Ovary (tissue), 10 donors: ENCODE measurements at regions of chr19 and their contacts with region 1.

Region 1: DNA sequence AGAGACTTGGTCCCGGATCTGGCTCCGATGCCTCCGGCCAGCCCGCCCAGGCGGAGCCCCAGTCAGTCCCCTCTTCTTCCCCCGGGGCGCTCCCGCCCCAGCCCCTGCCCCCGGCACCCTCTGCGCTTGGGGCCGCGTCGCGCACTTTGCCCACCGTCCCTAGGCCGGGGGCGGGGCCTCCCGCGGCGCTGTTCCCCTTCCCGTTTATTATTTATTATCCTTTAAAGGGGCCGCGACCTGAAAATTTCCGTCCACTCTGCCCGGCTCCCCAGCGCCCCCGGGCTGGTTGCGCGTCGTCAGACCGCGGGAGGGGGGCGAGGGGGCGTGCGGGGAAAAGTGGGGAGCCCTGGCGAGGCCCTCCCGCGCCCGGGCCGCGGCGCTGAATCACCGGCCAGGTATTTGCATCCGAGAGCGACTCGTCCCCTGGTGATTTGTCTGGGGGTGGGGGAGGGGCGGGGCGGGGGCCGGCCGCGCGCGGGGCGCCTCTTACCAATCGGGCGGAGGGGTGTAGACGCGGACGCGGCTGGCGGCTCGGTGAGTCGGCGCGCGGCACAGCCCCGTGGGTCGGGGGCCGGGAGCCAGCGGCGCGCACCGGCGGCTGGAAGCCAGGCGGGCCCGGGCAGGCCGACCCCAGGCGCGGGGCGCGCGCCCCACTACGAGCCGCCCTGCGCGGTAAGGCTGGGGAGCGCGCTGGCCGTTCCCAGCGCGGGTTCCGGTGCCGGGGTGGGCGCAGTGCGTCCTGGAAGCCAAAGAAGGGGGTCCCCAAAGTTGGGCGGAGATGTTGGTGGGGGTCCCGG is at the start of gene ARID3A:
- DNase-seq: peak; percentile 73 to 86 (median 83)
- H3K4me3 ChIP-seq: peak within 1 kb of the TSS; percentile 93
- H3K27ac ChIP-seq: peak within 1 kb of the TSS in 1 of 2 donors; percentile 26
- H3K4me1 ChIP-seq: peaks cover 5% of the 10 kb centered on the region
- H3K27me3 ChIP-seq: no peaks in the 10 kb centered on the region
- CTCF ChIP-seq: no peak
- EP300 ChIP-seq: no peak
- POLR2A ChIP-seq: no peak
- total RNA-seq, gene ARID3A: 2.1 to 8.1 (median 5.2) TPM

Region 2: DNA sequence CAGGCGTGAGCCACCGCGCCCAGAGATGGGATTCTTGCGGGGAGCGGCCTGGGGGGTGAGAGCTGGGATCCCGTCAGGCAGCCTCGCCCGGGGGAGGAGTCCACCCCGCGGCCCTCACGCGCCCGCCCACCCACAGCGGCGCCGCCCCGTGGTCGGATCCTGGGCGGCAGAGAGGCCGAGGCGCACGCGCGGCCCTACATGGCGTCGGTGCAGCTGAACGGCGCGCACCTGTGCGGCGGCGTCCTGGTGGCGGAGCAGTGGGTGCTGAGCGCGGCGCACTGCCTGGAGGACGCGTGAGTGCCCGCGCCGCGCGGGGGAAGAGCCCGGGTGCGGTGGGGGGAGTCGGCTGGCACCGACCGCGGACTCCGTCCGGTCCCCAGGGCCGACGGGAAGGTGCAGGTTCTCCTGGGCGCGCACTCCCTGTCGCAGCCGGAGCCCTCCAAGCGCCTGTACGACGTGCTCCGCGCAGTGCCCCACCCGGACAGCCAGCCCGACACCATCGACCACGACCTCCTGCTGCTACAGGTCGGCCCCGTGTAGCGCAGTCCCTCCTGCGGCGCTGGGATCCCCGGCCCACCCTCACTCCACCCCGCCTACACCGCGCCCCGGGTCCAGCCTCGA is 65.1 kb before region 1 on chr19:
- intact Hi-C with region 1: loop called in 1 of 4 experiments (anchors 5 kb)
- DNase-seq: peak in 3 of 5 donors; percentile 71 to 73 (median 71)
- H3K4me3 ChIP-seq: peak overlapping the region; percentile 25
- H3K27ac ChIP-seq: no peak overlapping the region
- H3K4me1 ChIP-seq: peaks cover 9% of the 10 kb centered on the region
- H3K27me3 ChIP-seq: peaks cover 4% of the 10 kb centered on the region
- CTCF ChIP-seq: no peak
- EP300 ChIP-seq: no peak
- POLR2A ChIP-seq: no peak

Region 3: DNA sequence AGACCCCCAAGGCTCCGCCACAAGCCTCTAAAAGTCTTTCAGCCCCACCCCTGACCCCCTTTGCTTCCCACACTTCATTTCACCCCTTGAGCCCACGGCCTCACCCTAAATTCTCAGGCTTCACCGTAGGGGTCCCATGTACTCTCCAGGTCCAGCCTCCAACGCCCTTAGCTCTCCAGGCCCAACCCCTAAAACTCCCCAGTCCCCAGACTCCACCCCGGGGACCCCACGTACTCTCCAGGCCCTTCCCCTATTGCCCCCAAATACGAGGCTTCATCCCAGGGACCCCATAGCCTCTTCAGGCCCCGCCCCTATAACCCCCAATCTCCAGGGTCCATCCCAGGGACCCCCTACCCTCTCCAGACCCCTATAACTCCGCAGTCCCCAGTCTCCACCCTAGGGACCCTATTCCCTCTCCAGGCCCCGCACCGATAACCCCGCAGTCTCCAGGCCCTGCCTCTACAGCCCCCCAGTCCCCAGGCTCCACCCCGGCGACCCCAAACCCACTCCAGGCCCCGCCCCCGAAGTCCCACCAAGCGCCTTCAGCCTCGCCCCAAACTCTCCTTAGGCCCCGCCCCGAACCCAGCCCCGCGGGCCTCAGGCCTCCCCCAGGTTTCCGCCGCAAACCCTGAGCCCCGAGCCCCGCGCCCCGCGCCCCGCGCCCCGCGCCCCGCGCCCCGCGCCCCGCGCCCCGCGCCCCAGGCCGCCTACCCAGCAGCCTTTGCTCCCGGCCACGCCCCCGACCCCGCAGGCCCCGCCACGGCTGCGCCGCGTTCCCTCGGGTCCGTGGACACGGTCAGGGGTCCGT is 33.3 kb before region 1 on chr19:
- intact Hi-C with region 1: no loop called
- DNase-seq: peak in 2 of 5 donors; percentile 48 to 68
- H3K4me3 ChIP-seq: peak overlapping the region; percentile 93
- H3K27ac ChIP-seq: peak overlapping the region; percentile 84 to 87
- H3K4me1 ChIP-seq: peaks cover 5% of the 10 kb centered on the region
- H3K27me3 ChIP-seq: no peaks in the 10 kb centered on the region
- CTCF ChIP-seq: no peak
- EP300 ChIP-seq: no peak
- POLR2A ChIP-seq: no peak

Region 4: DNA sequence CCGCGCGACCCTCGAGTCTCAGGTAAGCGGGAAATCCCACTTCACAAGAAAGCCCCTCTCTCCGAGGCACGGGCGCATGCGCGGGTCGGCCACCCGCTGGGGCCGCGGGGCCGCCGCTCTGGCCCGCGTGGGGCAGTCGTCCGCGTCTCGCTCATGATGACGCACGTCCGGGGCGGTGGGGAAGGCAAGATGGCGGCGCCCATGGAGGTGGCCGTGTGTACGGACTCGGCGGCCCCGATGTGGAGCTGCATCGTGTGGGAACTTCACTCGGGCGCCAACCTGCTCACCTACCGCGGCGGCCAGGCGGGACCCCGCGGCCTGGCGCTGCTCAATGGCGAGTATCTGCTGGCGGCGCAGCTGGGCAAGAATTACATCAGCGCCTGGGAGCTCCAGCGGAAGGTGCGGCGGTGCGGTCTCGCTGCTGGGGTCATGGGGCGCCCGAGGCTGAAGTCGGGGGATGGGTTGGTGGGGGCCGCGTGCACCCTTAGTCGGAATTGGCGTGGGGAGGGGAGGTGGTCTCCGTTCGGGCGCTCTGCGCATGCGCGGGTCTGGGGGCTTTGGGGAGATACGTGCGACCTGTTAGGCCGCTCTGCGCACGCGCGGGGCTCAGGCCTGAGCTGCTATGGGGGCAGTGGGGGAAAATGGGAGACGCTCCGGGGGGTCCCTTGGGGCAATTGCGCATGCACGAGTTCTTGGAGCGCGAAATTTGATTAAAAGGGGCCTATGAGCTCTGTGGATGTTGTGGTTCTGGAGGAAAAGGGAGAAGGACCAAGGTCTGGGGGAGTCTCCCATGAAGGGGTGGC is 58.6 kb after region 1 on chr19 and contains the start of gene WDR18:
- intact Hi-C with region 1: loop called (anchors 1 to 2 kb)
- DNase-seq: peak; percentile 94 to 95 (median 94)
- H3K4me3 ChIP-seq: peak within 1 kb of the TSS; percentile 94
- H3K27ac ChIP-seq: peak within 1 kb of the TSS; percentile 13 to 80
- H3K4me1 ChIP-seq: peaks cover 1% of the 10 kb centered on the region
- H3K27me3 ChIP-seq: no peaks in the 10 kb centered on the region
- CTCF ChIP-seq: peak; percentile 26 to 70 (median 61)
- EP300 ChIP-seq: no peak
- POLR2A ChIP-seq: peak; percentile 57
- total RNA-seq, gene WDR18: 19.4 to 45.6 (median 31.2) TPM

Region 5: DNA sequence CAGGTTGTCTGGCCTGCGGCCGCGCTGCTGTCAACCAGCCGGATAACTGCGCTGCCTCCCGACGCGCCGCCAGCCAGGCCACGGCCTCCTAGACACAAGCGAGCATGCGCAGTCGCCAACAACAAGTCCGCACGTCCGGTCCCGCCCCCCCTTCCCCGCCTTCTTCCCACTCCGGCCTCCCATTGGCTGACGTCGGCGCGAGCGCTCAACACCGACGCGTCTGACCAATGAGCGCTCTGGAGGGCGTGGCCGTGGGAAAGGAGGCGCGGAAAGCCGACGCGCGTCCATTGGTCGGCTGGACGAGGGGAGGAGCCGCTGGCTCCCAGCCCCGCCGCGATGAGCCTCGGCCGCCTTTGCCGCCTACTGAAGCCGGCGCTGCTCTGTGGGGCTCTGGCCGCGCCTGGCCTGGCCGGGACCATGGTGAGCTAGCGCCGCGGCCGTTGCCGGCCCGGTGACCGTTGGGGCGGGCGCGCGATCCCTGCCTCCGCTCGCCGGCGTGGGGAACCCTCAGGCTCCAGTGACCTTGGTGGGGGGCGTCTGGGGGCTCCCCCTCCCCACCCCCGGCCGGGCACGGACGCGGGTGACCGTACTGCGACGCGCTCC is 178.1 kb after region 1 on chr19 and contains the start of gene GPX4:
- intact Hi-C with region 1: loop called in 1 of 4 experiments (anchors 10 kb)
- DNase-seq: peak; percentile 99
- H3K4me3 ChIP-seq: peak within 1 kb of the TSS; percentile 84
- H3K27ac ChIP-seq: peak within 1 kb of the TSS; percentile 91 to 97
- H3K4me1 ChIP-seq: peaks cover 27% of the 10 kb centered on the region
- H3K27me3 ChIP-seq: no peaks in the 10 kb centered on the region
- CTCF ChIP-seq: no peak
- EP300 ChIP-seq: no peak
- POLR2A ChIP-seq: peak; percentile 78
- total RNA-seq, gene GPX4: 189 to 309 (median 247) TPM

Region 6: DNA sequence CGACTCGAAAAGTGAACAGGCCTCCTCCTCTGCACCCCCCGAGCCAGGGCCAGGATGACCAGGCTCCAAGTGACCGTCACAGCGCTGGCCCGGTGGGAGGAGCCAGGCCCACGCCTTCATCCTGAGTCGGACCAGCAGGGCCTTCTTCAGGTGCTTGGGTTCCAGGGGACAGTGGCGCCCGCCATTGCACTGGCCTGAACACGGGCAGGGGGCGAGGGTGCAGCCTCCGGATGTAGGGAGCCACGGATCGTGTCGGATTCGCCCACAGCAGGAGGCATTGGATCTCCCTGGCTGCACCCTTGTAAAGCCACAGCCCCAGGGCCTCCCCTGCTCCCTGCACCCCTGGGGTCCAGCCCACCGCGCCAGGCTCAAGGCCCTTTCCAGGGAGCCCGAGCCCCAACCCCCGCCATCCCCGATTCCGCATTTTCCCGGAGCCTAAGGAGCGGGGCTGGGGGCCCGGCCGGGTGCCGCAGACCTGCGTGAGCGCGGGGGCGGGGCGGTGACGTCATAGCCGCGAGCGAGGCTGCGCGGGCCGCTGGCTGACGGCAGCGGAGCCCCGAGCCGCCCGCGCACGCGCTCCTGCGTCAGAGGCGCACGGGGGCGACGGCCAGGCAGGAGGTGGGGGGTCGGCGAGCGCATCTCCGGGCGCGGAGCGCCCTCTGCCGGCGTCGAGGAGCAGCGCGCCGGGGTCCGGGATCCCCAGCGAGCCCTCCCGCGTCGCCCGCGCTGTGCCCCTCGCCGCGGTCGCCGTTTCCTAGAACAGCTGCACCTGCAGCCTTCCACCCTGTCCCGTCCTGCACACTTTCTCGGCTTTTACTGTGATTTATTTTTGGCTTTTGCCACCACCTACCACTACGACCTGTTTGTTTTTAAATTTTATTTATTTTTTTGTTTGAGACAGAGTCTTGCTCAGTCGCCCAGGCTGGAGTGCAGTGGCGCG is 314.3 kb after region 1 on chr19:
- intact Hi-C with region 1: loop called in 1 of 4 experiments (anchors 10 kb)
- DNase-seq: peak; percentile 91 to 97 (median 96)
- H3K4me3 ChIP-seq: peak overlapping the region; percentile 21
- H3K27ac ChIP-seq: peak overlapping the region; percentile 81 to 89
- H3K4me1 ChIP-seq: peaks cover 22% of the 10 kb centered on the region
- H3K27me3 ChIP-seq: peaks cover 4% of the 10 kb centered on the region
- CTCF ChIP-seq: peak; percentile 94 to 99 (median 97)
- EP300 ChIP-seq: no peak
- POLR2A ChIP-seq: no peak